ENCODE measurements at regions of chr2 and their contacts with region 1.

Region 1: DNA sequence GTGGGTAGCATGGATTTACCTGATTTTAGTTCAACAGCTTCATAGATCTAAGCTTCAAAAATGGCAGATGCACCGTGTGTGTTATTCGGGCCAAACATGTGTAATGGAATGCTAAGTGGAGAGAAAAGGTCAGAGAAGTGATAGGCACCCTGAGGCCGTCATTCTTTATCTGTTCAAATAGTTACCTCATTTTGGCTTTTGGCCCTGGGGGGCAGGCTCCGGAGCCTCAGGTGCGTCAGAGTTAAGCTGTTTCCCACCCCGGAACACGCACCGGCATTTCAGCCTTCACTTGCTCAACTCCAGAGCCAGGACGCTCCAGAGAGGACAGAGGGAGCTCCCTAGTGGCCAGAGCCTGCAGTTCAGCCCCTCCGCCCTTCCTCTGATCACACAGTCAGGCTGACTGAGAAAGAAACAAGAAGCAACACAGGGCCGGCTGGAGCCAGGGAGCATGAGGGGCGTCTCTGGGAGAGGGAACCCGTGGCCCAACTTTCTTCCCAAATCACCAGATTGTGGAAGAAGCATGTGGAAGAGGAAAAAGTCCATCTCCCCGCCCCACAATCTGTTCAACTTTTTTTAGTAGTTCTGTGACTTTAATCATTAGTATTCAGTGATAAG is 135.2 kb upstream of the EPC2 start:
- DNase-seq: peak; percentile 88
- H3K4me3 Mint-ChIP-seq: peak overlapping the region; percentile 58
- H3K27ac Mint-ChIP-seq: no peak overlapping the region
- H3K4me1 Mint-ChIP-seq: peaks cover 17% of the 10 kb centered on the region
- H3K27me3 Mint-ChIP-seq: no peaks in the 10 kb centered on the region

Region 2: GRCh38 chr2:147989809-147990403 is 519.5 kb before region 1 on chr2:
- CTCF ChIA-PET with region 1: interaction called, 60 read pairs
- POLR2A ChIA-PET with region 1: interaction called, 4 read pairs
- DNase-seq: no peak
- H3K4me3 Mint-ChIP-seq: no peak overlapping the region
- H3K27ac Mint-ChIP-seq: no peak overlapping the region
- H3K4me1 Mint-ChIP-seq: peaks cover 6% of the 10 kb centered on the region
- H3K27me3 Mint-ChIP-seq: no peaks in the 10 kb centered on the region

Region 3: DNA sequence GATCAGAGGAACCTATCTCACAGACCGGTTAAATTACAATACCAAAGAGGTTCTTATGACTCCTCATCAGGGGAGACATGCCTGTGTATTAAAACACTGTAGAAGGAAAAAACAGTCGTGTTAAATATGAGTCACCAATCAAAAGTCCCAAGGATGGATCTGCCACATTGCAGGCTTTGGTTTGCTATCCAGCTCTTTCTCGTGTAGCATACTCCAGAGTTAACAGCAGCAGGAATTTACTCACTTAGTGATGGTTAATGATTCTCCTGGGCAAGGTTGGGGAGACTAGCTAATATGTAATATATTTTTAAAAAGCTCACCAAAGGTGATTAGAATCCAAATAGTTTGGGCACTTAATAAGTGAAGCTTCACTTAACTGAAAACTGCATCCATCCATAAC is 378.8 kb before region 1 on chr2:
- CTCF ChIA-PET with region 1: no interaction called
- POLR2A ChIA-PET with region 1: no interaction called
- DNase-seq: no peak
- H3K4me3 Mint-ChIP-seq: no peak overlapping the region
- H3K27ac Mint-ChIP-seq: no peak overlapping the region
- H3K4me1 Mint-ChIP-seq: no peaks in the 10 kb centered on the region
- H3K27me3 Mint-ChIP-seq: no peaks in the 10 kb centered on the region

Region 4: GRCh38 chr2:148479398-148479797 is 30.0 kb before region 1 on chr2:
- CTCF ChIA-PET with region 1: no interaction called
- POLR2A ChIA-PET with region 1: no interaction called
- DNase-seq: no peak
- H3K4me3 Mint-ChIP-seq: no peak overlapping the region
- H3K27ac Mint-ChIP-seq: no peak overlapping the region
- H3K4me1 Mint-ChIP-seq: no peaks in the 10 kb centered on the region
- H3K27me3 Mint-ChIP-seq: peaks cover 7% of the 10 kb centered on the region

Region 5: DNA sequence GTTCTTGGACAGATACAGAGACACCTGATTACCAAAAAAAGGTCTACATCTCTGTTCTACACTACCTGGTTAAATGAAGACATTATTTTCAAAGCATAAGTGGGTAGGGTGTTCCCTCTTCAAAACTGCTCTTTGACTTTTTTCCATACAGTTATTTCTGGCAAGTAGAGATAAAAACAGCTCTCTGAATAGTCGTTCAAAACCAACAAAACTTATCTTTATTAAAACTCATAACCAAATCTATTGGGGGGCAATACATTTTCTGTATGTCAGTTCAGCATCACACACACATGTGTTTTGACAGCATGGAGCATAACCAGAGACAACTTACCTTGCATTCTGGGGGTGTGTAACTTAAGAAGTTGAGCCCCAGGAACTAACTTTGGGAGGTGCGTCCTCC is 13.8 kb before region 1 on chr2:
- CTCF ChIA-PET with region 1: interaction called, 30 read pairs
- POLR2A ChIA-PET with region 1: interaction called, 4 read pairs
- DNase-seq: no peak
- H3K4me3 Mint-ChIP-seq: no peak overlapping the region
- H3K27ac Mint-ChIP-seq: no peak overlapping the region
- H3K4me1 Mint-ChIP-seq: no peaks in the 10 kb centered on the region
- H3K27me3 Mint-ChIP-seq: no peaks in the 10 kb centered on the region

Region 6: DNA sequence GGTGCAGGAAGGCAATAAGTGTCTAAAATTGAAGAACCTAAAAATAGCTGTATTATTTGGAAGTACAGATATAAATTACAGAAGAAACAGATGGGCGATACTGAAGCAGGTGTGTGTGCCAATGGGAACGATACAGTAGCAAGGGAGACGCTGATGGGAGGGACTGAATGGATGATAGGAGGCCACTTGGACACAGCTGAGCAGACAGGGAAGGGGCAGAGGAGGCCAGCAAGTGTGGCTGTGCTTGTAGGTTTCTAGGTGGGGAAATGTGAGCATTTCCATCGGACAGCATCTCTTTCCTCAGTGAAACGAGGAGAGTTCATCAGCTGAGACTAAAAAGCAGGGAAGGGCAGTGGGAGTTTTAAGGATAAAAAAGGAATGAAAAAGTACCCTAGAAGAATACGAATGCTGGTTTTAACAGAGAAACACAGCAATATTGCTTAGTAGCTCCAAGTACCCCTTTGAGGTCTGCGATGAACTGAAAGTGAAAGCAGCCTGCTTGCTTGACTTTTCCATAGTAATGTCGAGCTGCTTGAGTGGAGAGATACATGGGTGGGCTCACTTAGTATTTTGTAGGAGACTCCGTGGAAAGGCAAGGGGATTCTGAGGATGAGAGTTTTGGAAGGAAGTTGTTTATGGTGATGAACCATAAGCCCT is 43.4 kb after region 1 on chr2:
- CTCF ChIA-PET with region 1: interaction called, 15 read pairs
- POLR2A ChIA-PET with region 1: interaction called, 6 read pairs
- DNase-seq: peak; percentile 45
- H3K4me3 Mint-ChIP-seq: no peak overlapping the region
- H3K27ac Mint-ChIP-seq: no peak overlapping the region
- H3K4me1 Mint-ChIP-seq: peaks cover 1% of the 10 kb centered on the region
- H3K27me3 Mint-ChIP-seq: no peaks in the 10 kb centered on the region

Region 7: GRCh38 chr2:148874868-148875341 is 365.5 kb after region 1 on chr2 and contains the start of gene KIF5C:
- CTCF ChIA-PET with region 1: no interaction called
- POLR2A ChIA-PET with region 1: no interaction called
- DNase-seq: peak; percentile 92
- H3K4me3 Mint-ChIP-seq: peak within 1 kb of the TSS; percentile 85
- H3K27ac Mint-ChIP-seq: peak within 1 kb of the TSS; percentile 54
- H3K4me1 Mint-ChIP-seq: peaks cover 21% of the 10 kb centered on the region
- H3K27me3 Mint-ChIP-seq: peaks cover 23% of the 10 kb centered on the region
- total RNA-seq, gene KIF5C: 14.7 to 21.7 TPM